CD8-positive, alpha-beta T cell (primary cell): ENCODE measurements at regions of chr10 and their contacts with region 1.

Region 1: DNA sequence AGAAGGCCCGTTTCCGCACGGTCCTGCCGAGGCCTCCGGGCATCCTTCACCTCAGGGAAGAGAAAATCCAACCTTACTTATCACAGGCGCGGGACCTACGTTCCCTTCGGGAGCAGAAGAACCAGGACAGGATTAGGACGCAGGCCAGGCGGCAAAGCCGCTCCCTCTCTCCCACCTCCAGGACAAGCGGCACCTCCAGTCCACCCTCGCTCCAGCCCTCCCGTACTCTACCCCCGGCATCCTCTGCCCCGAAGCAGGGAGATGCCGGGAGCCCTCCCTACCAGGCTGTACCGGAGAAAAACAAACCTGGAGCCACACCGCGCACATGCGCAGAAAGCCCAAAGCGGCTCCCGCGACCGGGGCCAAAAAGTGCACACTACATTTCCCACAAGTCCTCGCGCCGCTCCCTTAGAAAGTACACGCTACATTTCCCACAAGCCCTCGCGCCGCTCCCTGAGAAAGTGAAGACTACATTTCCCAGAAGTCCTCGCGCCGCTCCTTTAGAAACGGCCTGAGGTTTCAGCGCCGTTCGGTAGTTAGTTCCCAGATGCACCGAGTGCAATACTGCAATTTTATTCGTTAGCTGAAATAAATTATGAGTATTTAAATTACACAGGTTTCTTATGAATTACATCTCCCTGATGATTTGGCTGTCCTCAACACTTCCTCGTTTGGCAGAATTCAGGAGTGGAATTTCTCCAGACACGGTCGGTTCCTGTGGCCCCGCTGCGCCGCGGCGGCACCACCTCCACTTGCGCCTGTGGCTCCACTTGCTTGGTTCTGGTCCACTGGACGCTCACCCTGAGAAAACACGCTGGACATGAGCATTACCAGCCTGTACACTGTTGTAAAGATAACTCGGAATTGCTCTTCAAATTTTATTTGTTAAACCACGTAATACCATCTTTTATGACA is 85.6 kb downstream of the ZNF33B start:
- DNase-seq: peak; percentile 86 to 97 (median 95)
- ATAC-seq: peak; percentile 94
- H3K4me3 ChIP-seq: peak overlapping the region; percentile 88 to 94
- H3K4me3 Mint-ChIP-seq: peak overlapping the region; percentile 98
- H3K27ac ChIP-seq: peak overlapping the region; percentile 75 to 85
- H3K27ac Mint-ChIP-seq: peak overlapping the region; percentile 97
- H3K4me1 ChIP-seq: peaks cover 23% of the 10 kb centered on the region
- H3K4me1 Mint-ChIP-seq: peaks cover 49% of the 10 kb centered on the region
- H3K27me3 ChIP-seq: no peaks in the 10 kb centered on the region
- H3K27me3 Mint-ChIP-seq: no peaks in the 10 kb centered on the region
- CTCF ChIP-seq: no peak

Region 2: GRCh38 chr10:42638055-42638820 is 85.5 kb after region 1 on chr10 and contains the start of gene ZNF33B:
- CTCF ChIA-PET with region 1: no interaction called
- POLR2A ChIA-PET with region 1: no interaction called
- intact Hi-C with region 1: loop called (anchors 1 kb)
- DNase-seq: peak; percentile 84 to 97 (median 93)
- ATAC-seq: peak; percentile 92
- H3K4me3 ChIP-seq: peak within 1 kb of the TSS; percentile 82 to 88
- H3K4me3 Mint-ChIP-seq: peak within 1 kb of the TSS; percentile 98
- H3K27ac ChIP-seq: peak within 1 kb of the TSS; percentile 91 to 93
- H3K27ac Mint-ChIP-seq: peak within 1 kb of the TSS; percentile 98
- H3K4me1 ChIP-seq: peaks cover 14% of the 10 kb centered on the region
- H3K4me1 Mint-ChIP-seq: peaks cover 44% of the 10 kb centered on the region
- H3K27me3 ChIP-seq: no peaks in the 10 kb centered on the region
- H3K27me3 Mint-ChIP-seq: no peaks in the 10 kb centered on the region
- CTCF ChIP-seq: no peak
- total RNA-seq, gene ZNF33B: 16.4 to 17.0 TPM

Region 3: DNA sequence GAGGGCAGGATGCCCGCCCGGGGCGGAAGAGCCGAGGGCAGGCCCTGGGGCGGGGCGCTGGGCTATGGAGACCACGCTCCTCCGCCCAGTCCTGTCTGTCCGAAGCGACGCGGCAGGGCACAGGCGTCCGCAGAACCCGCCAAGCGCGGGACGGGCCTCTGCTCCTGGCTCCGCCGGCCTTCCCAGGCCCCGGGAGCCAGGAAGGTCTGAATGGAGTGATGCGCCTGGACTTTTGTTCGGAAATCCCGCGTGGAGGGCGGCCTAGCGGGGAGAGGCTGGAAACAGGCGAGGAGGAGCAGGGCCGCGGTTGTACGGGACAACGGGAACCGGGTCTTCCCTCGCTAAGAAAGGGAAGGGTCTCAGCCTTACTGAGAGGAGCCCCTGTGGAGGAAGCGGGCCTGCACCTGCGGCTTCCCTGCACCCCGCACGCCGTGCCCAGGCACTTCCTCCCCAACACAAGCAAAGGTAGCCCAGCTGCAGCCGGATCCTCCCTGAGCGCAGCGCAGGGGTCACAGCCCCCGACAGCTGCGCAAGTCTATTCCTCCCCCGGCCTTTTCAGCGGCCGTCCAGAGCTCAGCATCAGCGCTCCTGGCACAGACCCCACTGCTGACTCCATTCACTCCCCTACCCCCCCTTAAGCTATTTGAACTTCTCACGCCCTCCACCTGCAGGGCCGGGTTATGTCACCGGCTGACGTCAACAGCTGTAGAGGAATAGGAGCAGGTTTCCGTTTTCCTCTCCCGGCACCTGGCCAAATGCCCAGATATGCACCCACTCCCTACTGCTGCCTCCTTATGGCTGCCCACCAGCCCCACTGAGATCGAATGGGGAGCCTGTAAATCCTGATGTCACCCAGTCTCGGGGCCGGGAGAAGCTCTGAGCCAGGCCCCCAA is 380.9 kb after region 1 on chr10:
- CTCF ChIA-PET with region 1: no interaction called
- POLR2A ChIA-PET with region 1: no interaction called
- intact Hi-C with region 1: loop called in 1 of 2 experiments (anchors 5 kb)
- DNase-seq: peak in 6 of 9 experiments; percentile 33 to 79 (median 64)
- ATAC-seq: peak; percentile 64
- H3K4me3 ChIP-seq: peak overlapping the region; percentile 51 to 78
- H3K4me3 Mint-ChIP-seq: peak overlapping the region; percentile 85
- H3K27ac ChIP-seq: peak overlapping the region; percentile 19 to 73
- H3K27ac Mint-ChIP-seq: peak overlapping the region; percentile 80
- H3K4me1 ChIP-seq: peaks cover 17% of the 10 kb centered on the region
- H3K4me1 Mint-ChIP-seq: peaks cover 12% of the 10 kb centered on the region
- H3K27me3 ChIP-seq: no peaks in the 10 kb centered on the region
- H3K27me3 Mint-ChIP-seq: peaks cover 13% of the 10 kb centered on the region
- CTCF ChIP-seq: no peak

Region 4: DNA sequence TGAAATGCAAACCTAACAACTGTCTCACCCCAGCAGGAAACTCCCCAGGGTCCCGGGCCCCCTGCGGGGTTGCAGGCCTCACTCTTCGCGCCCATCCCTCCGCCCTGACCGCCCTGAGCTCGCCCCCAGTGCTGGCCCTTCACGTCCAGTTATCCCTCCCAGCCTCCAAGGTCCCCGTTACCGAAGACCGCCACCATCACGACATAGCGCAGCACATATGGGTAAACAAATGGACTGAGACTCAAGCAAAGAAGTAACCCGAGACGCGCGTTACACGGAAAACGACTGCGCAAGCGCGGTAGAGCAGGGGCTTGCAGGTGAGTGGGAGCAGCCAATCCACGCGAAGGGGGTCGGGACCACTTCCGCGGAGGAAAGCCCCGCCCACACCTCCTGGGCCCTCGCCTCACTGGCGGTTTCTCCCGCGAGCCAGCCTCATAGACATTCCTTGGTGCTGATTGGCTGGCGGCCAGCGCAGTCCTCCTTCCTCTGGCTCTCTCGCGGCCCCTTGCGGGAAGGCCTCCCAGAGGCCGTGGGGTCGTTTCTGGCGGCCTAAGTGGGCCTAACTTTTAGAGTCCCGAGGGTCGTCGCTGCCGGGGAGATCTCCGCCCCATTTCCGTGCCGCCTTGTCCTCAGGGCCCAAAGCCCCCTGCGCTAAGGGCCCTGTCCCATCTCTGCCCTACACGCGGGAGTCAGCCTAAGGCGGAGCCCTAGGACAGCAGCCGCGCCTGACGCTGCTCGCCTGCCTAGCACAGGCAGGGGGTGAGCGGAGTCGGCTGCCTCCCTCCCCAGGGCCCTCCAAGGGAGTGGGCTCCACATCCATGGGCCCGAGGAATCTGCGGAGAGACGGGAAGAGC is 809.5 kb after region 1 on chr10:
- CTCF ChIA-PET with region 1: no interaction called
- POLR2A ChIA-PET with region 1: no interaction called
- intact Hi-C with region 1: loop called in 1 of 2 experiments (anchors 10 kb)
- DNase-seq: peak; percentile 94 to 99 (median 97)
- ATAC-seq: peak; percentile 98
- H3K4me3 ChIP-seq: peak overlapping the region; percentile 80
- H3K4me3 Mint-ChIP-seq: peak overlapping the region; percentile 93
- H3K27ac ChIP-seq: peak overlapping the region; percentile 69 to 93
- H3K27ac Mint-ChIP-seq: peak overlapping the region; percentile 98
- H3K4me1 ChIP-seq: peaks cover 15% of the 10 kb centered on the region
- H3K4me1 Mint-ChIP-seq: peaks cover 26% of the 10 kb centered on the region
- H3K27me3 ChIP-seq: no peaks in the 10 kb centered on the region
- H3K27me3 Mint-ChIP-seq: no peaks in the 10 kb centered on the region
- CTCF ChIP-seq: peak; percentile 24

Region 5: DNA sequence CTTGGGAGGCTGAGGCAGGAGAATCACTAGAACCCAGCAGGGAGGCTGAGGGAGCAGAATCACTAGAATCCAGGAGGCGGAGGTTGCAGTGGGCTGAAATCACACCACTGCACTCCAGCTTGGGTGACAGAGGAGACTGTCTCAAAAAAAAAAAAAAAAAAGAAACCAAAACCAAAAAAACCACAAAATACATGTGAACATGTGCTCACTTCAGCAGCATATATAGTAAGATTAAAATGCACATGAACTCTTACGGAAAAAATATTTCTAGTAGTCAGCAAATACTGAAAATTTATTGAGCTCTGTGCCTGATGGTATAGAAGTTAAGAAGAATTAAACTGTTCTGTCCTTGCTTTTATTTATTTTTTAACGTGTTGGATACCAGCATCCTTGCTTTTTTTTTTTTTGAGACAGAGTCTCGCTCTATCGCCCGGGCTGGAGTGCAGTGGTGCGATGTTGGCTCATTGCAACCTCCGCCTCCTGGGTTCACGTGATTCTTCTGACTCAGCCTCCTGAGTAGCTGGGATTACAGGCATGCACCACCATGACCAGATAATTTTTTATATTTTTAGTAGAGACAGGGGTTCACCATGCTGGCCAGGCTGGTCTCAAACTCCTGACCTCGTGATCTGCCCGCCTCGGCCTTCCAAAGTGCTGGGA is 874.5 kb after region 1 on chr10:
- CTCF ChIA-PET with region 1: no interaction called
- POLR2A ChIA-PET with region 1: no interaction called
- intact Hi-C with region 1: no loop called
- DNase-seq: peak in 3 of 9 experiments; percentile 19 to 51 (median 40)
- ATAC-seq: peak; percentile 79
- H3K4me3 ChIP-seq: no peak overlapping the region
- H3K4me3 Mint-ChIP-seq: peak overlapping the region; percentile 51
- H3K27ac ChIP-seq: no peak overlapping the region
- H3K27ac Mint-ChIP-seq: peak overlapping the region; percentile 69
- H3K4me1 ChIP-seq: peaks cover 17% of the 10 kb centered on the region
- H3K4me1 Mint-ChIP-seq: peaks cover 9% of the 10 kb centered on the region
- H3K27me3 ChIP-seq: no peaks in the 10 kb centered on the region
- H3K27me3 Mint-ChIP-seq: no peaks in the 10 kb centered on the region
- CTCF ChIP-seq: no peak

Region 6: DNA sequence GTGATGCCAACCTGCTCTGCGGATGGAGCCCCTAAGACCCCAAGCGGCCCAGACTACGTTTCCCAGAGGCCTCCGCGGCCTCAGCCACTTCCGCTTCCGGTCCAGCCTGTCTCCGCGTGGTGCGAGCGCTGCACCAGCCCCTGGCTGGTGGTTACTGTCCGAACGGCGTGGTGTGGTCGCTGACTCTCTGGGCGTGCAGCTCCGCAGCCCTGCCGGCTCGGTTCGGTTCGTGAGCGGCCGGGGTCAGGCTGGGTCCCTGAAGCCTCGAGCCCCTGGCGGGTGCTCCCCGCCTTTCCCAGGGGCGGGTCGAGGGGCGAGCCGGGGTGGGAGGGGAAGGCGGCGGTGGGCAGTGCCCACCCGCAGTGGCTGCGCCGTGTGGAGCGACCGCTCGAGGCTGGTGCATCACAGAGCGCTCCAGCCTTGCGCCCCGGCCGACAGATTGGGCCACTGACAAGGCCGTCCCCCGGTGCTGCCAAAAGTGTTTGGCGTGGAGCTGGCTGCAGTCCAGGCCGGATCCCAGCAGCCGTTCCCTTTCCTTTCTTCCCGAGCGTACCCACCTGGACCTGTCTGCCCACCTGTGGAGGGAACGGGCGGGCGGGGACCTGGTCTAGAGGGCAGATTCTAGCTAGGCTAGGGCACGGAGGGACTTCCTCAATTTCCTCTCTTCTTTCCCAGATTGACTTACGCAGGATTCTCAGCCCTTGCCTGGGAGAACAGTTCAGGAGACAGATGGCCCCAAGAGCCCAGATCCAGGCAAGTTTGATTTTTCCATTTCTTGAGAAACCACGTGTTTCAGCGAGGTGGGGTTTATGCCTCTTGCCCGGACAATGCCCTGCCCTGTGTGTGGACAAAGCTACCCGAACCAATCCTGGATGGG is 1053.8 kb after region 1 on chr10 and contains the start of gene ZNF485:
- CTCF ChIA-PET with region 1: no interaction called
- POLR2A ChIA-PET with region 1: no interaction called
- intact Hi-C with region 1: loop called in 1 of 2 experiments (anchors 1 kb)
- DNase-seq: peak; percentile 21 to 82 (median 67)
- ATAC-seq: peak; percentile 92
- H3K4me3 ChIP-seq: peak within 1 kb of the TSS; percentile 62 to 71
- H3K4me3 Mint-ChIP-seq: peak within 1 kb of the TSS; percentile 84
- H3K27ac ChIP-seq: peak within 1 kb of the TSS; percentile 10 to 18
- H3K27ac Mint-ChIP-seq: peak within 1 kb of the TSS; percentile 81
- H3K4me1 ChIP-seq: peaks cover 15% of the 10 kb centered on the region
- H3K4me1 Mint-ChIP-seq: peaks cover 33% of the 10 kb centered on the region
- H3K27me3 ChIP-seq: no peaks in the 10 kb centered on the region
- H3K27me3 Mint-ChIP-seq: no peaks in the 10 kb centered on the region
- CTCF ChIP-seq: no peak
- total RNA-seq, gene ZNF485: 0.92 to 1.2 TPM